ENCODE measurements at regions of chr6 and their contacts with region 1.

Region 1: DNA sequence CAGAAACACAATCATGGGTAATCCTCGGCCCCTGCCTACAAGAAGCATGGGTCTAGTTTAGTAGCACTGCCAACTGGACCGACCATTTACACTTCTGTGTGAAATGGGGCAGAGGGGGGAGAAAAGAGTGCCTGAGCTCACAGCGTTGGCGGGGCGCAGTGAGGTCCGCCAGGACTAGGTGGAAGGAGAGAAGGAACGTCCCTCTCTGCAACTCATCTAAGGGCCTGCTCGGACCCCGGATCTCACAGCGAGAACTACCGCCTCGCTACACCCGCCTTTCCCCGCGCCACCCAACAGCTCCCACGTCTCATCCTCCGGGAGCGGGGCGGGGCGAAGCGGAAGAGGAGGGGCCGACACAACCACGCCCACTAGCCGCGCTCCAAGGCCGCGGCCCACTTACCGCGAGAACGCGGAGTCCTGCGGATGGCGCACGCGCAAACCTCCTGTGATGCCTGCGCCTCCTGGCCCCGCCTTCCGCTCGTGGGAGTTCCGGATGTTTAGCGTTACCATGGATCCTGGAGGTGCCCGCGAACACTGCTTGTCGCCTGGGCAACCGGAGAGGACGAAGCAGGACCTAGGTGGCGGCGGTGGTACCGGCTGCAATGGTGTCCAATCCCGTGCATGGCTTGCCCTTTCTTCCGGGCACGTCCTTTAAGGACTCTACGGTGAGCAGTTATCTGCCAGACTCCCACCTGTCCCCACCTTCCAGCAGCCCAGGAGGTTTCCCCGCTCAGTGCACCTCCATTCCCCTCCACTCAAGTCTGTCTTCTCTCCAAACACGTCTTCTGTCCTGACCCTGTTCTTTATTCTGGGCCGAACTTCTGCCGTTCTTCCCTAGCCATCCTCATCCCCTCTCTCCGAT is at the start of gene EFHC1:
- DNase-seq: peak; percentile 97
- H3K4me3 Mint-ChIP-seq: no peak within 1 kb of the TSS
- H3K27ac Mint-ChIP-seq: no peak within 1 kb of the TSS
- H3K4me1 Mint-ChIP-seq: peaks cover 32% of the 10 kb centered on the region
- H3K27me3 Mint-ChIP-seq: no peaks in the 10 kb centered on the region
- CTCF ChIP-seq: no peak
- total RNA-seq, gene EFHC1: 26.3 and 26.9 TPM in 2 replicates

Region 2: DNA sequence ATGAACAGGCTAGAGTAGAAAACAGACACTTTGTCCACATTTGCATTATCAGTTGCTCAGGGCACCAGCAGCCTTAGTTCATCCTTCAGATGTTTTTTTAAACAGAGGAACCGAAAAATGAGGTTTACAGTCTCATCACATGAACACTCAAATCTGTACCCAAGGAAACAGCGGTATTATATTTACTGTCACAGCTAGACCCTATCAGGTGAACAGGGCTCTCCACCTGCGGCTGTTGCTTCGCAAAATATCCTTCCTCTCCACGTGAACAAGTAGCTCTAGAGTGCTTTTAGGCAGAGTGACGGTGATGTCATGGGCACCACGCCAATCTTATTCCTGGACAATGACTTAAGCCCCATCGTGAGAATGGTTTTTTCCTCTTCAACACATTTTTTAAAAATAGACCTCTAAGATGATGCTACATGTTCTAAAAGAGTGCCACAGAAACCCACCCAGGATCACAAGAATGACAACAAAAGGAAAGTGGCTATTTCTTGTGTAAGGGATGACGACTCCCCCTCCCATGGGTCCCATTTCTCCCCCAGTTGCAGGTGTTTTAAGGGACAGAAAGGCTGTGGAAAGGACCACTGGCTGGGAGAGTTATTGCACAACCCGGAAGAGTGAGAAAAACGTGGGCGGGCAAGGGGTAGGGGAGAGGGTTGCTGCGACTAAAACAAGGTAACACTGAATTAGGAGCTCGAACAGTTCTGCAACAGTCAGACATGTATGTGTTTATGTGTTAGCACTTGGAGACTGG is 77.8 kb after region 1 on chr6:
- CTCF ChIA-PET with region 1: interaction called, 12 read pairs
- POLR2A ChIA-PET with region 1: interaction called, 42 read pairs
- intact Hi-C with region 1: no loop called
- DNase-seq: no peak
- H3K4me3 Mint-ChIP-seq: no peak overlapping the region
- H3K27ac Mint-ChIP-seq: no peak overlapping the region
- H3K4me1 Mint-ChIP-seq: peaks cover 5% of the 10 kb centered on the region
- H3K27me3 Mint-ChIP-seq: no peaks in the 10 kb centered on the region
- CTCF ChIP-seq: no peak

Region 3: DNA sequence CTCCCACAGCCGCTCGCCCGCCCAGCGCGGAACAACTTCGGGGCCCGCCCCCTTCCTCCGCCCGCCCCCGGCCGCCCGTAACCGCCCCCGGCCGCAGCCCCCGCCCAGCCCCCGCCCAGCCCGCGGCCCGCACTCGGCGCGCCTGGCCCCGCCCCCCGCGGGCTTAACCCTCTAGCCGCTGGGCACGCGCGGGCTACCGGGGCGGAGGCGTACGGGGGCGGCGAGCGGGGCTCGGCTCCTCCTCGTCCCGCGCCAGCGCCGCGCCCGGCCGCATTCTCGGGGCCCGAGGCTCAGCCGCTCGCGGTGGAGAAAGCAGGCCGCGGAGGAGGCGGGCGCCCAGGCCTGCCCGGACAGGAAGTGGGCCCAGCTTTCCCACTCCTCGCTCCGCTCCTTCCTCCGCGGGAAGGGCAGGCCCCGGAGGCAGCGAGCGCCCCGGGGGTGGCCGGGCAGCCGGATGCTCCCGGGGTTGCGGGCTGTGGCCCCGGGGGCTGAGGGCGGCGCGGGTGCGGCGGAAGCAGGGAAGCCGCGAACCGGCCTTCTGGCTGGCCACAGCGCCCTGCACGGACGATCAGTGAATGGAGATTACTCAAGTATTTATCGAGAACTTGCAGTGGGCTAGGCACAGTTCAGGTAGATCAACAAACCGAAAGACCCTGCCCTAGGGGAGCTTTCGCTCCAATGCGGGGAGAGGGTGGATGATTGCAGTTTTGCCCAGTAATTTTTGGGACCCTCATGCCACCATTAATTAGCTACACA is 157.2 kb after region 1 on chr6 and contains the start of gene TRAM2:
- CTCF ChIA-PET with region 1: interaction called, 5 read pairs
- POLR2A ChIA-PET with region 1: interaction called, 11 read pairs
- intact Hi-C with region 1: loop called (anchors 2 kb)
- DNase-seq: peak; percentile 73
- H3K4me3 Mint-ChIP-seq: peak within 1 kb of the TSS; percentile 69
- H3K27ac Mint-ChIP-seq: peak within 1 kb of the TSS; percentile 85
- H3K4me1 Mint-ChIP-seq: peaks cover 31% of the 10 kb centered on the region
- H3K27me3 Mint-ChIP-seq: no peaks in the 10 kb centered on the region
- CTCF ChIP-seq: peak; percentile 26
- total RNA-seq, gene TRAM2: 9.9 and 10.1 TPM in 2 replicates

Region 4: GRCh38 chr6:52647199-52647598 is 227.2 kb after region 1 on chr6:
- CTCF ChIA-PET with region 1: interaction called, 112 read pairs
- POLR2A ChIA-PET with region 1: interaction called, 4 read pairs
- intact Hi-C with region 1: no loop called
- DNase-seq: peak; percentile 22
- H3K4me3 Mint-ChIP-seq: no peak overlapping the region
- H3K27ac Mint-ChIP-seq: no peak overlapping the region
- H3K4me1 Mint-ChIP-seq: peaks cover 9% of the 10 kb centered on the region
- H3K27me3 Mint-ChIP-seq: peaks cover 24% of the 10 kb centered on the region
- CTCF ChIP-seq: no peak

Region 5: DNA sequence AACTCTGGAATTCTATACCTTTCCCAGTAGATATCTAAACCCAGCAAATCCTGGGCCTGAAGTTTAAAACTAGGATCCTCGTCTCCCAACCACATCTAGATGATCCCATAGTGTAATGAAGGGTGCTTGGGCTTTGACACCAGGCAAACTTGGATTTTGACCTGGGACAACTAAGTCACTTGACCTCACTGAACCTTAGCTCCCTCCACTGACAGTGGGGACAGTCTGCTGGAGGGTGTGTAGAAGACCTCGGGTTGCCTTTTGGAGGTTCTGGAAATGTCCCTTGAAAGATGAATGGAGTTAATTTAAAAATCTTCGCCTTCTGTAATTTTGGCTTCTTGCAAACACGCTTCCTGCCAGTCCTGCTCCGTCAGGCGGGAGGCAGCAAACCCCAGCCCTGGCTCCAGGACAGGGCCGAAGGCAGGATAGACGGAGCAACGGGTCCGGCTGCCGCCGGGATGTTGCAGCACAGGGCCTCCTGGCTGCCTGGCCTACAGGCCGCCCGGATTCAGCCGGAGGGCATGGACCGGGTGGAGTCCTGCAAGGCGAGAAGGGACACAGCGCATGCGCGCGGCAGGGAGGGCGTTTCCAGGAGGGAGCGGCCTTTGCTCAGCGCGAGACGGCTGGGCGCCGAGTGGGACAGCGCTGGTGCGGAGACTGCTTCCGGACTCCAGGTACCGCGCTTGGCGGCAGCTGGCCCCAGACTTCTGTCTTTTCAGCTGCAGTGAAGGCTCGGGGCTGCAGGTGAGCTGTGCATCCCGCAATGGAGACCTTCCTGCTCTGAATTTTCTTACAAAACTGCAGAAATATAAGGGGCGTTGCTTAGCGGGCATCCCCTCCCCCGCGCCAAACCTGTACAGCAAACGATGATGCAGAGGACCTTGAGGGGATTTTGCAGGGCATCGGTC is 250.7 kb after region 1 on chr6 and contains the start of gene TMEM14A:
- CTCF ChIA-PET with region 1: interaction called, 13 read pairs
- POLR2A ChIA-PET with region 1: interaction called, 19 read pairs
- intact Hi-C with region 1: no loop called
- DNase-seq: peak; percentile 94
- H3K4me3 Mint-ChIP-seq: peak within 1 kb of the TSS; percentile 77
- H3K27ac Mint-ChIP-seq: no peak within 1 kb of the TSS
- H3K4me1 Mint-ChIP-seq: peaks cover 15% of the 10 kb centered on the region
- H3K27me3 Mint-ChIP-seq: no peaks in the 10 kb centered on the region
- CTCF ChIP-seq: no peak
- total RNA-seq, gene TMEM14A: 10.5 and 15.6 TPM in 2 replicates